HEK293T (cell line): ENCODE measurements at regions of chr4 and their contacts with region 1.

Region 1: GRCh38 chr4:26583865-26584652 is at the start of gene TBC1D19:
- DNase-seq: peak; percentile 77

Region 2: DNA sequence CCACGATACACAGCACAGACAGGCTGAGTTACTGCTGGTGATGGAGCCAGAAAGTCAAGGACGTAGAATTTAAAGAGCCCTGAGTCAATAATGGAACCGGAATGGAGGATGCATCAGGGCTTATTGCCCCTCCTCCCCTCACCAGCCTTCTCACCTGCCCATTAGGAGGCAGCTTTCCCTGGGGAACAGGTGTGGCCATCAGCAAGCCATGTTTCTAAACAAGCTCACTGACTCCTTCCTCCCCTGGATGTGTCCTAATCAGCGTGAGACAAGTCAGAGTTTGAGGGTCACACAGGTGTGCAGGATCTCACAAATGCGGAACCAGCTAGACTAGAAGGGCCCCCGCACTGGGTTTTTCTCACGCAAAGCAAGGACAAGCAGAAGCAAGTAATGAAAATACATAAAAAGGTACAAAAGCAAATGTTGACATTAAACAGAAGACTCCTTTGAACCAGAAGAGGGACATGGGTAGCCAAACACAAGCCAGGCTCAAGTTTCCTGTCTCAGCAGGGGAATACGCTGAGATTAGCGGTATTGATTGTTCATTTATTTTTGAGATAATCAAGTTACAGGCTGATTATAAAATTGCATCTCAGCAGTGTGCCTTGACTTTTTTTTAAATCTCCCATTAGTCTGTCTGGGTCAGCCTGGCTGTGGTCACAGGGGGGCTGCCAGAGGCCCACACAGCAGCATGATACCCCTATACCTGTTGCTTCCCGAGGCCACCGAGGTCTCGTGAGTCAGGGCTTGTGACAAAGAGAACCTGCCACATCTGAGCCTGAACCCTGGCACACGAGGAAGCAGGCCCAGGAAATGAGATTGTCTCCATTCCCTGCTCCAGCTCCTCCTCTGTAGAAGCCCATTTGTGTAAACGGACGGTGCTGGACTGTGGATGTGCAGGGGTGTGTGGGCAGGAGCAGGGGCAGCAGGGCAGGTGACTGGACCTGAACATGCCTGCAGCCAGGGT is 131.2 kb before region 1 on chr4:
- CTCF ChIA-PET with region 1: no interaction called
- POLR2A ChIA-PET with region 1: no interaction called
- DNase-seq: no peak

Region 3: GRCh38 chr4:26568446-26568994 is 15.5 kb before region 1 on chr4:
- CTCF ChIA-PET with region 1: interaction called, 5 read pairs
- POLR2A ChIA-PET with region 1: interaction called, 10 read pairs
- DNase-seq: no peak